ENCODE measurements at regions of chr5 and their contacts with region 1.

Region 1: DNA sequence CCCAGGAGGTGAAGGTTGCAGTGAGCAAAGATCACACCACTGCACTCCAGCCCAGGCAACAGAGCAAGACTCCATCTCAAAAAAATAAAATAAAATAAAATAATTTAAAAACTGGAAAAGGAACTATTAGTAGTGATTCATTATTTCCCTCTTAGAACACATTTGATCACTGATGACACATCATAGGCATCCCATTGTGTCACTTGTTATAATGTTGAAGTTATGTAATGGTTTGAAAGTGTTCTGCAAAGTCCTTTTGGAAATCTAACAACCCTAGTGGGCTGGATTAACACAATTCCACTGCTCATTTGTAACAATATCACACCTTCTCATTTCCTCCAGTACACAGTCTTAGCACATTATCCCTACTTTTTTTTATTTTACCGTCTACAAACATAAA is 81.8 kb upstream of the LMNB1 start:
- DNase-seq: no peak
- ATAC-seq: no peak
- H3K4me3 ChIP-seq: no peak overlapping the region
- H3K4me3 Mint-ChIP-seq: no peak overlapping the region
- H3K27ac ChIP-seq: no peak overlapping the region
- H3K27ac Mint-ChIP-seq: no peak overlapping the region
- H3K4me1 ChIP-seq: no peaks in the 10 kb centered on the region
- H3K4me1 Mint-ChIP-seq: peaks cover 1 to 4% (median 3%) of the 10 kb centered on the region in 3 donors
- H3K27me3 ChIP-seq: no peaks in the 10 kb centered on the region
- H3K27me3 Mint-ChIP-seq: no peaks in the 10 kb centered on the region

Region 2: GRCh38 chr5:126707080-126707479 is 12.0 kb after region 1 on chr5:
- CTCF ChIA-PET with region 1: interaction called, 3 to 13 read pairs
- POLR2A ChIA-PET with region 1: no interaction called
- DNase-seq: no peak
- ATAC-seq: no peak
- H3K4me3 ChIP-seq: no peak overlapping the region
- H3K4me3 Mint-ChIP-seq: no peak overlapping the region
- H3K27ac ChIP-seq: no peak overlapping the region
- H3K27ac Mint-ChIP-seq: no peak overlapping the region
- H3K4me1 ChIP-seq: no peaks in the 10 kb centered on the region
- H3K4me1 Mint-ChIP-seq: no peaks in the 10 kb centered on the region
- H3K27me3 ChIP-seq: peaks cover 0 to 2% of the 10 kb centered on the region in 2 experiments
- H3K27me3 Mint-ChIP-seq: no peaks in the 10 kb centered on the region

Measured in T-cell (primary cell).